AG04449 (cell line): ENCODE measurements at regions of chr2 and their contacts with region 1.

Region 1: DNA sequence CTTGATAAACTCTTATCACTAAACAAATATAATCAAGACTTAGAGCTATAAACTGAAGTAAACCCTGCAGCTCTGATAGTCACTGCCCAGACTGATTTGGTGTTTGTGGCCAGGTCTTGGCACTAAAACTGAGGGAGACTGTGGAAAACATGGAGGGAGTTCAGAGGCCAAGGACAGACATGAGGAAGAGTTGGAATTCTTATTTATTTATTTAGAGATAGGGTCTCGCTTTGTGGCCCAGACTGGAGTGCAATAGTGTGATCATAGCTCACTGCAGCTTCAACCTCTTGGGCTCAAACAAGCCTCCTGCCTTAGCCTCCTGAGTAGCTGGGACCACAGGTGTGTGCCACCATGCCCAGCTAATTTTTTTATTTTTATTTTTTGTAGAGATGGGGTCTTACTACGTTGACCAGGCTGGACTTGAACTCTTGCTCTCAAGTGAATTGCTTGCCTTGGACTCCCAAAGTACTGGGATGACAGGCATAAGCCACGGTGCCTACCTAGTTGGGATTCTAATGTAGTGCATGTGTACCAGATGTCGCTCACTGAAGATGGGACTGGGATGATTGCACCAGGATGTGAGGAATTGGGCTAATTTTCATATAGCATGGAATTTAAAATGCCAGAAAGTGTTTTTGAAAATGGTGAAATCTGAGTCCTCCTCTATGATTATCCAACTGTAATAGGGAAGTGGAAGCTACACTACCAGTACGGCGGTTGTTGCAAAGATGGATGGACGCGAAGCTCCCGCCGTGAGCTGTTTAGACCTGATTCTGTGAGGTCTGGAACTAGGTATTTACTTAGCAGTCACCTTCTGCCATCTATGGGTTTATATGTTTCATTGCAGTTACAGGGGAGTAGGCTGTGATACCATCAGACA is 52.7 kb upstream of the CTLA4 start:
- DNase-seq: no peak
- H3K4me3 ChIP-seq: no peak overlapping the region
- CTCF ChIP-seq: peak; percentile 60

Region 2: GRCh38 chr2:202588647-202589581 is 1226.0 kb before region 1 on chr2:
- CTCF ChIA-PET with region 1: interaction called, 26 read pairs
- POLR2A ChIA-PET with region 1: no interaction called
- DNase-seq: no peak
- H3K4me3 ChIP-seq: peak overlapping the region; percentile 27
- CTCF ChIP-seq: peak; percentile 86

Region 3: GRCh38 chr2:203238704-203239526 is 576.0 kb before region 1 on chr2 and contains the start of gene CYP20A1:
- CTCF ChIA-PET with region 1: interaction called, 19 read pairs
- POLR2A ChIA-PET with region 1: interaction called, 3 read pairs
- DNase-seq: peak; percentile 60
- H3K4me3 ChIP-seq: peak within 1 kb of the TSS; percentile 66
- CTCF ChIP-seq: peak; percentile 52

Region 4: GRCh38 chr2:203463266-203463678 is 351.6 kb before region 1 on chr2:
- CTCF ChIA-PET with region 1: interaction called, 10 read pairs
- POLR2A ChIA-PET with region 1: no interaction called
- DNase-seq: no peak
- H3K4me3 ChIP-seq: no peak overlapping the region; the same call in 1 of the 2 replicates
- CTCF ChIP-seq: no peak

Region 5: DNA sequence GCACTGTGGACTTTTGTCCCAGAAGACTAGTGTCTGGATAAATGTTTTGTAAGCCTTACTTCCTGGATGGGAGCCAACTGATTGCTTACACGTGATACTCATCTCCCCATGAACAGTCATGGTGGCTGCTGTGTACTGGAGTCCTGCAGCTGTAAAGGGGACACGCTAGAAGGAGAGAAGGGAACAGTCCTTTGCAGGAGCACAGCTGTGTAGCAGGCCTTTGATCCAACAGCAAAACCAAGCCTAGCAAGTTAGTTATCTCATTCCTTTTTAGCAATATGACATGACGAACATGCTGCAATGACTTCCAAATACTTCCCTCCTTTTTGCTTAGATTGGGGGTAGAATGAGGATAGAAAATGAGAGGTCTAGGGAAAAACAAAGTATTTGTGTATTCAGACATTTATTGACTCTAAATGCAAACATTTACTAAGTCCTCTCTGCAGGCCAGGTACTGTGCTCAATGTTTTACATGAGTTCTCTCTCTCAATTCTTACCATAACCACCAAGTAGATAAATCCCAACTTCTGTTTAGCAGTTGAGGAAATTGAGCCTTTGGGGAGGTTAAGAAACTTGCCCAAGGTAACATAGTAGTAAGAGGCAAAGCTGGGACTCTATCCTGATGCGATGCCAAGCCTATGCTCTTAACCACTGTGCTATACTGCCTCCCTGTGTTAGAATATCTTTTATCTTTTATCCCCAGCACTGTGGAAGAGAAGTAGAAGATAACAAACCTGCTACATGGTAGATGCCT is 163.9 kb before region 1 on chr2:
- CTCF ChIA-PET with region 1: interaction called, 30 read pairs
- POLR2A ChIA-PET with region 1: no interaction called
- DNase-seq: no peak
- H3K4me3 ChIP-seq: no peak overlapping the region
- CTCF ChIP-seq: peak; percentile 27

Region 6: GRCh38 chr2:203804070-203804469 is 10.8 kb before region 1 on chr2:
- CTCF ChIA-PET with region 1: interaction called, 11 read pairs
- POLR2A ChIA-PET with region 1: interaction called, 3 read pairs
- DNase-seq: peak; percentile 98
- H3K4me3 ChIP-seq: no peak overlapping the region
- CTCF ChIP-seq: no peak

Region 7: GRCh38 chr2:203900253-203900652 is 85.4 kb after region 1 on chr2:
- CTCF ChIA-PET with region 1: no interaction called
- POLR2A ChIA-PET with region 1: no interaction called
- DNase-seq: no peak
- H3K4me3 ChIP-seq: no peak overlapping the region
- CTCF ChIP-seq: no peak

Region 8: GRCh38 chr2:204655131-204655530 is 840.2 kb after region 1 on chr2:
- CTCF ChIA-PET with region 1: no interaction called
- POLR2A ChIA-PET with region 1: no interaction called
- DNase-seq: peak; percentile 42
- H3K4me3 ChIP-seq: no peak overlapping the region
- CTCF ChIP-seq: no peak